ENCODE measurements at regions of chr3 and their contacts with region 1.

Region 1: DNA sequence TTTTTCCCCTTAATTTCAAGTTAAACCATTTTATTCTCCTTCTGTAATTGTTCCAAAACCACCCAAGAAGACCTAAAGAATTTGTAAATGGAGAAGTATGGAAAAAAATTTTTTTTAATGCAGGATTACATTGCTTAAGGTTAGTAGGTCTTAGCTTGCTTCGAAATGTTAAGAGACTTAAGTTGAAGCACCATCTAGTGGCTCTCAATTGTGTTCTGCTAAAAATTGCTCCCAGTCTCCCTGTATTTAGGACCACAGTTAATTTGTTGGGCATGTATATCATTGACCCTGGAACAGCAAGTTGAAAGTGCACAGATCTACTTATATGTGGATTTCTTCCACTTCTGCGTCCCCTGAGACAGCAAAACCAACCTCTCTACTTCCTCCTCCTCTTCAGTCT is 32.4 kb downstream of the CD200R1L start:
- DNase-seq: peak in 2 of 3 donors; percentile 39 to 40
- H3K4me3 ChIP-seq: peak overlapping the region in 1 of 3 experiments; percentile 55
- H3K4me3 Mint-ChIP-seq: peak overlapping the region in 1 of 2 donors; percentile 77
- H3K27ac ChIP-seq: peak overlapping the region in 1 of 2 donors; percentile 87
- H3K27ac Mint-ChIP-seq: peak overlapping the region; percentile 82 to 95 (median 90)
- H3K4me1 ChIP-seq: peaks cover 73 to 84% of the 10 kb centered on the region in 2 donors
- H3K4me1 Mint-ChIP-seq: peaks cover 77% of the 10 kb centered on the region
- H3K27me3 ChIP-seq: no peaks in the 10 kb centered on the region
- H3K27me3 Mint-ChIP-seq: peaks cover 0 to 2% (median 0%) of the 10 kb centered on the region in 3 donors
- CTCF ChIP-seq: no peak

Region 2: DNA sequence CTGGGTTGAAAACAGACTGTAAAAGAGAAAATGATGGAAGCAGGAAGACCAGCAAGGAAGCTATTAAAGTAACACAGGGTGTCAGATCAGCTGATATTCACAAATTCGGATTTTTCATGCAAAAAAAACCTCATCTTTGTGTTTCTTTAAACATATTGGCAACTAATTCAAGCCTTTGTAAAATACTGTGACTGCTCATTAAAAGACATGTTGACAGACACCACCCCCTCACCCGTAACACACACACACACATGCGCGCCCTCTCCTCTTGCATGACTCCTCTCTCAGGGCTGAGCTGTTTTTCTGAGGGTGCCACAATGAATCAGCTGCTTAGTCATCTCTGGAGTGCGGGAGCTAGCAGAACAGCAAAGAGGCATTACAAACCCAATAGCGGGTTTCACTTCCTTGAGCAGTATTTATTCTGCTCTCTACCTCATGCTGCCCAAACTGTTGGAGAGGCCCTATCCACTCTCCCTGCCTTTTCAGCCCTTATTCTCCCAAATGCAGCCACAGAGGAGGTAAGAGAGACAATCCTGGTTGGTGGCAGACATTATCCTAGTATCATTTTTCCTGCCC is 137.5 kb before region 1 on chr3:
- intact Hi-C with region 1: loop called in 1 of 2 experiments (anchors 10 kb)
- DNase-seq: peak; percentile 94 to 97 (median 95)
- H3K4me3 ChIP-seq: peak overlapping the region; percentile 0 to 69 (median 40)
- H3K4me3 Mint-ChIP-seq: peak overlapping the region; percentile 42 to 81
- H3K27ac ChIP-seq: peak overlapping the region in 1 of 2 donors; percentile 90
- H3K27ac Mint-ChIP-seq: peak overlapping the region; percentile 87 to 95 (median 92)
- H3K4me1 ChIP-seq: peaks cover 55 to 70% of the 10 kb centered on the region in 2 donors
- H3K4me1 Mint-ChIP-seq: peaks cover 70% of the 10 kb centered on the region
- H3K27me3 ChIP-seq: no peaks in the 10 kb centered on the region
- H3K27me3 Mint-ChIP-seq: peaks cover 0 to 6% (median 0%) of the 10 kb centered on the region in 3 donors
- CTCF ChIP-seq: no peak

Region 3: GRCh38 chr3:112776012-112776411 is 38.3 kb before region 1 on chr3:
- intact Hi-C with region 1: loop called in 1 of 2 experiments (anchors 5 kb)
- DNase-seq: peak; percentile 53 to 86 (median 85)
- H3K4me3 ChIP-seq: no peak overlapping the region
- H3K4me3 Mint-ChIP-seq: no peak overlapping the region
- H3K27ac ChIP-seq: peak overlapping the region in 1 of 2 donors; percentile 15
- H3K27ac Mint-ChIP-seq: peak overlapping the region in 5 of 7 donors; percentile 12 to 82 (median 70)
- H3K4me1 ChIP-seq: peaks cover 47 to 63% of the 10 kb centered on the region in 2 donors
- H3K4me1 Mint-ChIP-seq: peaks cover 68% of the 10 kb centered on the region
- H3K27me3 ChIP-seq: no peaks in the 10 kb centered on the region
- H3K27me3 Mint-ChIP-seq: peaks cover 0 to 10% (median 1%) of the 10 kb centered on the region in 3 donors
- CTCF ChIP-seq: no peak

Region 4: GRCh38 chr3:112858410-112859069 is 44.3 kb after region 1 on chr3:
- intact Hi-C with region 1: loop called (anchors 2 to 5 kb)
- DNase-seq: peak; percentile 77 to 91 (median 85)
- H3K4me3 ChIP-seq: peak overlapping the region; percentile 19 to 64 (median 48)
- H3K4me3 Mint-ChIP-seq: peak overlapping the region; percentile 21 to 83
- H3K27ac ChIP-seq: peak overlapping the region; percentile 27 to 87
- H3K27ac Mint-ChIP-seq: peak overlapping the region; percentile 78 to 96 (median 94)
- H3K4me1 ChIP-seq: peaks cover 47 to 52% of the 10 kb centered on the region in 2 donors
- H3K4me1 Mint-ChIP-seq: peaks cover 47% of the 10 kb centered on the region
- H3K27me3 ChIP-seq: no peaks in the 10 kb centered on the region
- H3K27me3 Mint-ChIP-seq: no peaks in the 10 kb centered on the region
- CTCF ChIP-seq: no peak

Region 5: DNA sequence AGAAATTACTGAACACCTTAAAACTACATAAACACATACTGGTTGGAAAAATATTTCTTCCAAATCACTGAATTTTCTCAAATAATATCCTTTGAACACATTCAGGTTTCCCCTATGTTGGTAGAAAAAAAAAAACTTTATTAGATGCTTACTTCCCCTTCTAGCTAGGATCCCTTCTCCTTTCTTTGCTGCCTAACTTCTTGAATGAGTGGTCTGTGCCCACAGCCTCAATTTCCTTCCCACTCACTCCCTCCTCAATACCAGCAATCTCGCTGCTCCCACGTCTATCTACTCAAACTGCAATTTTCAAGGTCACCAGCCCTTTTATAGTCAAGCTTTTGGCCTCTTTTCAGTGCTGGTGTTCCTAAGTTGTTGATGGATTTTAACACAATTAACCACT is 152.4 kb after region 1 on chr3:
- intact Hi-C with region 1: loop called (anchors 5 kb)
- DNase-seq: peak; percentile 46 to 76 (median 72)
- H3K4me3 ChIP-seq: peak overlapping the region in 1 of 3 experiments; percentile 47
- H3K4me3 Mint-ChIP-seq: peak overlapping the region; percentile 1 to 72
- H3K27ac ChIP-seq: peak overlapping the region in 1 of 2 donors; percentile 83
- H3K27ac Mint-ChIP-seq: peak overlapping the region; percentile 83 to 96 (median 93)
- H3K4me1 ChIP-seq: peaks cover 41 to 49% of the 10 kb centered on the region in 2 donors
- H3K4me1 Mint-ChIP-seq: peaks cover 50% of the 10 kb centered on the region
- H3K27me3 ChIP-seq: no peaks in the 10 kb centered on the region
- H3K27me3 Mint-ChIP-seq: peaks cover 0 to 1% (median 0%) of the 10 kb centered on the region in 3 donors
- CTCF ChIP-seq: no peak